Uterus (tissue), 4 donors: ENCODE measurements at regions of chr11 and their contacts with region 1.

Region 1: DNA sequence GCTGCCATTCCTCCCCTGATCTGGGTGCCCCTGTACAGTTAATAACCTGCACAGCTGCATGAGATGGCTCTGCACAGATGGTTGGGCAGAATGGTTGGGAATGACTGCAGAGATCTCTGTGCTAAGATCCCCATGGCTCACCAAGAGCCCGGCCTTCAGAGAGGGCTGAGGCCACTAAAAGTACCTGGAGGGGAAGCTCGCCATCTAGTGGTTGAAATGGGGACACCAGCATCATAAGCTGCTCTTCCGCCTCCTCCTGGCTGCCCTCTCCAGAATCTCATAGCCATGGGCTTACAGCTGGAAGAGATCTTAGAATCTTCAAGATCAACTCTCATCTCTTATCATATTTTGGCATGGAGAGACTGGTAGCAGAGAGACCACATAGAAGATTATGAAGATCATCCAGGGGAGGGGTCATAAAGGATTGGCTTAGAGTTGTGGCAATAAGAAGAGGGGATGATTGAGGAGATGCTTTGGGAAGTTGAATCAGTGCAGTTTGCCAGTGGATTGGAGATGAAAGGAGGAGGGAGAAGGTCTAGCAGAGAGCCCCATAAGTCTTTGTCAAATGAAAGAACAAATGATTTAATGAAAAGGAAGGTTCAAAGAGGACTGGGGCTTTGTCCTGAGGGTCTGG is 22.0 kb upstream of the TLCD5 start:
- DNase-seq: peak; percentile 63
- H3K4me3 ChIP-seq: no peak overlapping the region
- H3K27ac ChIP-seq: no peak overlapping the region
- H3K4me1 ChIP-seq: no peaks in the 10 kb centered on the region
- H3K27me3 ChIP-seq: no peaks in the 10 kb centered on the region
- CTCF ChIP-seq: peak; percentile 64 to 80 (median 74)
- POLR2A ChIP-seq: no peak

Region 2: DNA sequence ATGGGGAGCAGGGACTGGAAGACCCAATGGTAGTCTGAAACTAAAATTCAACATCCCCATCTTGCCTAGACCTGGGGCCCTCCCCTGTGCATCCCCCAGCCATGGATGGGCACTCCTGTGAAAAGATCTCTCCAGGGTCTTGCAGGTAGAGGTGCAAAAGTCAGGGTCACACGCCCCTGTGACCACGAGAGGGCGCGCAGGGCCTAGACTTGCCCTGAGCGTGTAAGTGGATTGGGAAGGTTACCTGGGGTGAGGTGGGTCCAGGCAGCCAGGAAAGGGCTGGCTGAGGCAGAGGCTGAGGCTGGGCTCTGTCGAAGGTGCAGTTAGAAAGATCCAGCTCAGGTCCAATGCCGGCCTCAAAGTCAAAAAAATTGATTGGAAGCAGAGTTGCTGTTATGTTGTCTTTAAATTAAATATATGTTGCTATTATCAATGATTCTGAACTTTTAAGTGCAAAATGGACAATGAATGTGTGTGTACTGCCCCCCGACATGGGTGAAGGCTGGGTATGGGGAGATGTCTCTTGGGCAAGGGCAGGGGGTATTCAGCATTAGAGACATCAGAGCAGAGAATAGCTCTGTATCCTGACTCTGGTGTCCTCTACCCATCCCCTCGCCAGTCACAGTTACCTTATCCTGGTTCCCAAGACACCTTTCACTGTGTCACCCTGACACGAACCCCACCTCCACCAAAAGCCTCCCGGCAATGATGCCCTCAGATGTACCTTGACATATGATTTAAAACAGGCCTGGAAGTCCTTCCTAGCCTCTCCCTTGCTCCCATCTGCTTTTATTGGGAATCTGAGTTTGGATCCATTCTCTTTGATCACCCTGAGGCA is 67.9 kb before region 1 on chr11:
- intact Hi-C with region 1: loop called (anchors 5 kb)
- DNase-seq: peak in 1 of 2 donors; percentile 54
- H3K4me3 ChIP-seq: no peak overlapping the region
- H3K27ac ChIP-seq: no peak overlapping the region
- H3K4me1 ChIP-seq: peaks cover 0 to 4% of the 10 kb centered on the region in 2 donors
- H3K27me3 ChIP-seq: peaks cover 0 to under 1% of the 10 kb centered on the region in 2 donors
- CTCF ChIP-seq: peak; percentile 46 to 74 (median 60)
- POLR2A ChIP-seq: no peak